ENCODE measurements at regions of chr9 and their contacts with region 1.

Region 1: DNA sequence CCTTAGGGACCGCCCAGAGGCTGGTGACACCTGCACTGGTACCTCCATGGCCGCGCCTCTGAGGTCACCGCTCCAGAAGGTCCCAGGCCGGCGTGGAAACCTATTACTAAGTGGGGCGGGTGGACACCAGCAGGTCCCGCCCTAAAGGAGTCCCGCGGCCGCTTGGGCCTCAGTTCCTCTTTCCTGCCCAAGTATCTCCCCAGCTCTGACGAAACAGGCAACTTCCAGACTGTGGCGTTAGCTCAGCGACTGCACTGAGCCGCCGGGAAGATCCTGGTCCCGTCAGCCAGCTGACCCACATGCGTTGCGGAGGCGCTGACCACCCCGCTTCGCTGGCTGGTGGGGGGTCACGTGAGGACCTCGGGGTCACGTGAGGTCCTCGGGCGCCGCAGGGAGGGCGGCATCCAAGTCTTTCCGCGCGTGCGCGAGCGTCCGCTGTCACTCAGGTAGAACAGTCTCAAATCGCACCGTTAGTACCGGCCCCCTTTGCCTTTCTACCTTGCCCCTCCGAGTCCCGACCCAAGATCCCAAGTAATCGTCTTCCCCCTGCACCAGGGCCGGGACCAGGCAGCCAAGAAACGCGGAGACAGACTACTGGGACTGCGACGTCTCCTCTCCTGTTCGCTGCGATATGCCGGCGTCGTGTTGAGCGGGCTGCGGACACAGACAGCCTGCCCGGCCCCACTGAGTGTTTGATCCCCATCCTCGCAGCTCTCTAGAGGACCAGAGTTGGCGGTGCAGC is 53.7 kb upstream of the KDM4C start:
- DNase-seq: peak; percentile 64 to 94 (median 80)
- ATAC-seq: peak; percentile 88 to 93
- H3K4me3 Mint-ChIP-seq: peak overlapping the region; percentile 90 to 97 (median 93)
- H3K27ac Mint-ChIP-seq: peak overlapping the region; percentile 93 to 99 (median 96)
- H3K4me1 Mint-ChIP-seq: peaks cover 6 to 21% (median 12%) of the 10 kb centered on the region in 4 donors
- H3K27me3 Mint-ChIP-seq: no peaks in the 10 kb centered on the region

Region 2: DNA sequence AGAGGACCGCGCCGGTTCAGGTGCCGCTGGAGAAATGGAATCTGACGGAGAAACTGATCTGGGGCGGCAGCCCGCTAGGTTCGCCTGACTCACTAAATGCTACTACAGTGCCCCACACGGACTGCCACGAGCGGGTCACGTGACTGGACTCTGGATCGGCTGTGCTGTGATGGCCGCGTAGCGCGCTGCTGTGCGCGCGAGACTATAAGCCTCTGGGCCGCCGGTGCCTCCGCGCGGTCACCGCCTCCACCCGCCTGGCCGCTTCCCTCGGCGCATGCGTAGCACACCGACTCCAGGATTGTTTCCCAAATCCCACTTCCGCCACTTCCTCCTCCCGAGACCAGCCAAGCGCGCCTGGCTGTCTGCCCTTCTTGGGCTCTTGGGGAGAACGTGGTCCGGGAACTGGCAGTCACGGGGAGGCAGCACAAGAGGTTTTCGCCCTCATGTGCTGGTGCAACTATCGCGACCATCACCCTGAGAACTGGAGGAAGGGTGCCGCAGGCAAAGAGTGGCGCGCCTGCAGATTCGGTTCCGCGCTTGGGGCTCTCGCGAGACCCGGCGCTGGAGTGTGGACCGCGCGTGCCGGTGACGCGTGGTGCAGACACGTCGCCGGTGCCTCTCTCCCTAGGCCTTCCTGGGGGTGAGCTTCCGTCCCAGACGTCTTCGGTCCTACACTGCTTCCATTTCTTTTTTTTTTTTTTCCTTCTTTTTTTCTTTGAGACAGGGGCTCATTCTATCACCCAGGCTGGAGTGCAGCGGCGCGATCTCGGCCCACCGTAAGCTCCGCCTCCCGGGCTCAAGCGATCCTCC is 22.7 kb before region 1 on chr9:
- POLR2A ChIA-PET with region 1: interaction called, 58 read pairs
- DNase-seq: peak; percentile 82 to 96 (median 90)
- ATAC-seq: peak; percentile 88 to 89
- H3K4me3 Mint-ChIP-seq: peak overlapping the region; percentile 93 to 98 (median 94)
- H3K27ac Mint-ChIP-seq: peak overlapping the region; percentile 98 to 100 (median 99)
- H3K4me1 Mint-ChIP-seq: peaks cover 8 to 34% (median 19%) of the 10 kb centered on the region in 4 donors
- H3K27me3 Mint-ChIP-seq: no peaks in the 10 kb centered on the region

Region 3: DNA sequence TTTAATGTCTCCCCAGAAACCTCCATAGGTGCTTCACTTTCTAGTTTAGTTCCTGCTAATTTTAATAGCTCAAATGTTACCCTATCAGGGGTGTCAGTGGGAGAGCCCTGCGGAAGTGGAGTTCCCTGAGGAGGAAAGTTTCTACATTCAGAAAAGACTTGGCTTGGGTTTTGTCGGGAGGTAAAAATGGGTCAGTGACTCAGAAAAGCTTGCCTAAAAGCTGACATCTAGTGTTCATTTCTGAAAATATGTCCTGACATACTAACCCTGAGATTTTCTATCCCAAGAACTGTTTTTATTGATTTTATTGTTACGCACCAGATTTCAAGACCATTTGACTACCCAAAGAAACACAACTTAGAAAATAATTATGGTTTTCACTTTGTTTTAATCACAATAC is 17.7 kb before region 1 on chr9:
- POLR2A ChIA-PET with region 1: interaction called, 58 read pairs
- DNase-seq: no peak
- ATAC-seq: no peak
- H3K4me3 Mint-ChIP-seq: no peak overlapping the region
- H3K27ac Mint-ChIP-seq: peak overlapping the region in 2 of 10 donors; percentile 22 to 83
- H3K4me1 Mint-ChIP-seq: peaks cover 4 to 43% (median 12%) of the 10 kb centered on the region in 4 donors
- H3K27me3 Mint-ChIP-seq: no peaks in the 10 kb centered on the region

Region 4: GRCh38 chr9:6715755-6716643 is 11.9 kb after region 1 on chr9:
- POLR2A ChIA-PET with region 1: interaction called, 31 read pairs
- DNase-seq: peak; percentile 31 to 87 (median 53)
- ATAC-seq: peak; percentile 92
- H3K4me3 Mint-ChIP-seq: peak overlapping the region; percentile 83 to 93 (median 87)
- H3K27ac Mint-ChIP-seq: peak overlapping the region; percentile 85 to 94 (median 91)
- H3K4me1 Mint-ChIP-seq: peaks cover 5 to 11% (median 8%) of the 10 kb centered on the region in 4 donors
- H3K27me3 Mint-ChIP-seq: no peaks in the 10 kb centered on the region

Measured in naive thymus-derived CD8-positive, alpha-beta T cell (primary cell).